ENCODE measurements at regions of chr13 and their contacts with region 1.

Region 1: GRCh38 chr13:72565893-72566292 is 161.5 kb downstream of the MZT1 start:
- DNase-seq: peak; percentile 25
- H3K4me3 ChIP-seq: no peak overlapping the region
- H3K27ac ChIP-seq: no peak overlapping the region
- H3K4me1 ChIP-seq: no peaks in the 10 kb centered on the region
- H3K27me3 ChIP-seq: no peaks in the 10 kb centered on the region
- CTCF ChIP-seq: peak; percentile 28 to 37
- POLR2A ChIP-seq: no peak

Region 2: DNA sequence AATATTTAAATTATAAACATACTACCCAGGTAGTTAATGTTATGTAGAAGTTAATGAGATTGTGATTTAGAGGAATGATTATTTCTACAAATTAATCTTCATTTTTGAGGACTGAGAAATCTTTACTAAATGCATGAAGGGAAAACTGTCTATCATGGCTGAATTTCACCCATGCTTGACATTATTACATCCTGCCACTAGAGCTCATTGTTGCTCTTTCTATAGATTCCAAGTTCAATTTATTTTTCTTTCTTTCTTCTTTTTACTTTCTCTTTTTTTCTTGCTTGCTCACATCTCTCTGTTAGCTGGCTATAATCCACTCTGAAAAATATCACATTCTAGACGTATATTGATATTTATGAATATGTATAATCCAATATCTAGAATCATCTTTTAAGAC is 1952.6 kb before region 1 on chr13:
- CTCF ChIA-PET with region 1: interaction called, 8 read pairs
- POLR2A ChIA-PET with region 1: no interaction called
- dilution Hi-C with region 1: no loop called
- intact Hi-C with region 1: loop called (anchors 10 kb)
- DNase-seq: peak; percentile 25
- H3K4me3 ChIP-seq: no peak overlapping the region
- H3K27ac ChIP-seq: no peak overlapping the region
- H3K4me1 ChIP-seq: no peaks in the 10 kb centered on the region
- H3K27me3 ChIP-seq: no peaks in the 10 kb centered on the region
- CTCF ChIP-seq: peak; percentile 25 to 33
- POLR2A ChIP-seq: no peak

Region 3: DNA sequence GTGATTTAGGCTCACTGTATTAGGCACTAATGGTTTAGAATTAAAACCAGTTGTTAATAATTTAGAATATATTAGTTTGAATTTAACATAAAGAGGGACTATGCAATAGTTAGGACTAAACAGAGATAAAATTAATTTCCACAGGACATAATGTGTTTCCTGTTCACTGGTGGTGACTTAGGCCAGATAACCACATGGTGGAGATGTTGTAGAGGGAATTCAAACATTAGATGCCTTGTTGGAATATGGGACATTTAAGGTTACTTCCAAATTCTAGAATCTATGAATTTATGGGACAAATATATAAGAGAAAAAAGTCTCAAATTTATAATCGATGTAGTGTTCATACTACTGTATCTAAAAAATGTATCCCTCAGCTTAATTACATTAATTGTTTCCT is 1842.2 kb before region 1 on chr13:
- CTCF ChIA-PET with region 1: no interaction called
- POLR2A ChIA-PET with region 1: no interaction called
- dilution Hi-C with region 1: no loop called
- intact Hi-C with region 1: loop called (anchors 10 kb)
- DNase-seq: peak; percentile 62
- H3K4me3 ChIP-seq: no peak overlapping the region
- H3K27ac ChIP-seq: no peak overlapping the region
- H3K4me1 ChIP-seq: no peaks in the 10 kb centered on the region
- H3K27me3 ChIP-seq: no peaks in the 10 kb centered on the region
- CTCF ChIP-seq: peak in 1 of 2 donors; percentile 28
- POLR2A ChIP-seq: no peak

Region 4: GRCh38 chr13:71912524-71912923 is 653.4 kb before region 1 on chr13:
- CTCF ChIA-PET with region 1: no interaction called
- POLR2A ChIA-PET with region 1: no interaction called
- dilution Hi-C with region 1: no loop called
- intact Hi-C with region 1: no loop called
- DNase-seq: no peak
- H3K4me3 ChIP-seq: no peak overlapping the region
- H3K27ac ChIP-seq: no peak overlapping the region
- H3K4me1 ChIP-seq: no peaks in the 10 kb centered on the region
- H3K27me3 ChIP-seq: no peaks in the 10 kb centered on the region
- CTCF ChIP-seq: no peak
- POLR2A ChIP-seq: no peak

Region 5: GRCh38 chr13:72379581-72379980 is 186.3 kb before region 1 on chr13:
- CTCF ChIA-PET with region 1: no interaction called
- POLR2A ChIA-PET with region 1: no interaction called
- dilution Hi-C with region 1: no loop called
- intact Hi-C with region 1: no loop called
- DNase-seq: no peak
- H3K4me3 ChIP-seq: no peak overlapping the region
- H3K27ac ChIP-seq: no peak overlapping the region
- H3K4me1 ChIP-seq: no peaks in the 10 kb centered on the region
- H3K27me3 ChIP-seq: no peaks in the 10 kb centered on the region
- CTCF ChIP-seq: no peak
- POLR2A ChIP-seq: no peak

Region 6: DNA sequence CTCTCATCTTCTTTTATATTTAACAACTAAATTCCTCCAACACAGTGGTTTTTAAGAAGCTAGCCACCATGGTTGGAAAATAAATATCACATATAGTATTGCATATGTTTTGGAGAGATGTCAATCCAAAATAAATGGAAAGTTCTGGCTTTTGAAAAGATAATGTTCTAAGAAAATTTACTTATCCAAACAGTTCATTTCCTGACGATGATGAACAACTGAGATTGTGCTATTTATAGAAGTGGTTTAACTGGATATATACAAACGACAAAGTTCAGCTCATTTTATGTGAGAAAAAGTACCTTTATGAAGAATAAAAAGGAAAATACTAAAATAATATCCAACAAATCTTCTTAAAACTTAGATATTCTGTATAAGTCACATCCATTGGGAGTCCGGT is 13.2 kb before region 1 on chr13:
- CTCF ChIA-PET with region 1: interaction called, 17 read pairs
- POLR2A ChIA-PET with region 1: no interaction called
- dilution Hi-C with region 1: no loop called
- intact Hi-C with region 1: no loop called
- DNase-seq: no peak
- H3K4me3 ChIP-seq: no peak overlapping the region
- H3K27ac ChIP-seq: no peak overlapping the region
- H3K4me1 ChIP-seq: no peaks in the 10 kb centered on the region
- H3K27me3 ChIP-seq: no peaks in the 10 kb centered on the region
- CTCF ChIP-seq: no peak
- POLR2A ChIP-seq: no peak

Region 7: GRCh38 chr13:73288596-73288995 is 722.7 kb after region 1 on chr13:
- CTCF ChIA-PET with region 1: no interaction called
- POLR2A ChIA-PET with region 1: no interaction called
- dilution Hi-C with region 1: no loop called
- intact Hi-C with region 1: no loop called
- DNase-seq: no peak
- H3K4me3 ChIP-seq: no peak overlapping the region
- H3K27ac ChIP-seq: no peak overlapping the region
- H3K4me1 ChIP-seq: no peaks in the 10 kb centered on the region
- H3K27me3 ChIP-seq: no peaks in the 10 kb centered on the region
- CTCF ChIP-seq: no peak
- POLR2A ChIP-seq: no peak

Measured in endothelial cell of umbilical vein (primary cell).